Transverse colon (tissue), 4 donors: ENCODE measurements at regions of chr4 and their contacts with region 1.

Region 1: DNA sequence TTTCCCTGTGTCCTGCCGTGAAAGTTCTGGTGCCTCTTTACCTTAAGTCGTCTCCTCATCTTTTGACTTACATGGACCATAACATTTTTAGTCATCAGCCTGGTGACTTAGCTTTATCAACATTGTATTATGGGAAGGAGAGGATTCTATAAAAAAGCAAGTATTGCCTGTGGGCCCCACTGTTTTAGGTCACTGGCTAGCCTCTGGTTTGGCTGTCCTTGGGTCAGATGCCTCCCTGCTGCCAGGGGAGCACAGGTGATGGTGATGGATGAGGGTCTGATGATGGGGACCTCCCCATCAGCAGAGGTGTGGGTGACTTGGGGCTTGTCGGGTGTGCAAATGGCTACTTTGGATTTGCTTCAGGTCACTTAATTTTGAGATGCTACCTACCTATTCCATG is 51.8 kb downstream of the FAM193A start:
- DNase-seq: no peak
- H3K4me3 ChIP-seq: no peak overlapping the region
- H3K27ac ChIP-seq: no peak overlapping the region
- H3K4me1 ChIP-seq: peaks cover 11 to 50% (median 31%) of the 10 kb centered on the region in 4 donors
- H3K27me3 ChIP-seq: no peaks in the 10 kb centered on the region
- CTCF ChIP-seq: no peak
- EP300 ChIP-seq: no peak
- POLR2A ChIP-seq: no peak

Region 2: GRCh38 chr4:2515830-2516550 is 72.3 kb before region 1 on chr4:
- in situ Hi-C with region 1: no loop called
- intact Hi-C with region 1: loop called (anchors 2 kb)
- DNase-seq: no peak
- H3K4me3 ChIP-seq: no peak overlapping the region
- H3K27ac ChIP-seq: no peak overlapping the region
- H3K4me1 ChIP-seq: no peaks in the 10 kb centered on the region
- H3K27me3 ChIP-seq: no peaks in the 10 kb centered on the region
- CTCF ChIP-seq: no peak
- EP300 ChIP-seq: no peak
- POLR2A ChIP-seq: no peak